ENCODE measurements at regions of chr19 and their contacts with region 1.

Region 1: DNA sequence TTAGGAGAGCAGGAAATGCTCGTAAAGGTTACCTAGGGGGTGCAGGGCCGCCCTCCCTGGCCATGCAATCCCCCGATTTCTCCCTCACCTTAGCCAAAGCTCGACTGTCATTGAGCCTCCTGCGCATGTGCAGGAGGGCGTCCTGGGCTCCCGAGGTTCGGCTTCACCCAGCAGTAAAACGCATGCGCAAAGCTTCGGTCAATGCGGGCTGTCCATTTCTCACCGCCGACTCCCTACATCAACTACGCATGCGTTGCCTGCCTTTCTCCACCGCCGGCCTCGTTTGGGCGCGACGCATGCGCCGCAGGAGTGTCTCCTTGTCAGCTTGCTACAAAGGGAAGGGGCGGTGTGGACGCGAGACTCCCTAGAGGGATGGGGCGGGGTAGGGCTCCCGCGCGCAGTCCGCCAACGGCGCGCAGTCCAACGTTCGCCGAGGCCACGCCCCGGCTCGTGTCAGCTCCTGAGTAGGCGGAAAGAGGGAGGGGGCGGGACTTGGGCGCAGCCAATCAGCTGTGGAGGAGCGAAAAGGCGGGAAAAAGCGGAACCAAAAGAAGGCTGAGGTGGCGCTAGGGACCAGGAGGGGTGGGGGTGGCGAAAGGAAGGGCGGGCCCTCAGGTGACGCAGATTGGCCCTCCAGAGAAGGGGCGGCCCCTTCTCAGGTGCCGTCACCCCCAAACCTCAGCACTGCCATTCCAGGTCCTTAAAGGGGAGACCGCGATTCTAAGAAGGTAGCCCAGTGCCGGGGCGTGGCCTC is at the starts of genes SYNGR4 and TMEM143:
- DNase-seq: peak; percentile 99

Region 2: DNA sequence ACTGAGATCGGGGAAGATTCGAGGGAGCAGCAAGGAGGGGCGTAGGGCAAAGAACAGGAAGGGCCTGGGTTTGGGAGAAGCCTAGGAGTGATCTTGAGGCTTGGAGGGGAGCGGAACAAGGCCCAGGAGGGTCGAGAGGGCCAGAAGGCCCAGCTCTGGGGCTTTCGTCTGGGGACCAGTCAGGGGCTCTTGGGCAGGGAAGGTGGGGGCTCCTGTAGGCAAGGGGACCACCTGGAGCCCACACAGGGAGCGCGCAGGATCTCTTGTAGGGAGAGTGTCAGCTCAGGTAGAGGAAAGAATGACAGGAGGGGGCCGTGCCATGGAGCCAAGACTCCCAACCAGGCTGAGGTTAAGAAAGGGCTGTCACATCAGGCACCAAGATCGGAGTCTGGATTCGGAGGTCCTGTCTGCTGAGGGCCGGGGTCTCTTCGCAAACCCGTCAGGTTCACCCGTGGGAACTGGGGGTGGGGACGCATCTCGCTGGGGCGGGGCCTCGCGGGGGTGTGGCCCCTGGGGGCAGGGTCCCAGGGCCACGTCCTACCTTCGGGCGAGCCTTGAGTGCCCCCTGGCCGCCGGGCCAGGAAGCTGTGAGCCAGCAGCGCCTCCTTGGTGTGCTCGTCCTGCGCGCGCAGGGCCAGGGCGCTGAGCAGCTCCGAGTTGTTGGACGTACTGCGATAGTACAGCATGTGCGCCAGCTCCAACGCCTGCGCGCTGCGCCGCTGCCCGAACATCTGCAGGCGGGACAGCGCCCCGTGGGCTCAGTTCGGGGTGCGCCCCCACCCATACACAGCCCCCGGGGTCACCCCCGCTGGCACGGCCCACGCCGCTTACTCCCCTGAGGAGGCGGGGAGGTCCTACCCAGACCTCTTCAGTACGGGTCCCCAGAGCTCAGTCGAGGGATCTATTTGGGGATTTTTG is 30.3 kb before region 1 on chr19:
- CTCF ChIA-PET with region 1: no interaction called
- POLR2A ChIA-PET with region 1: interaction called, 19 read pairs
- DNase-seq: peak; percentile 90

Region 3: DNA sequence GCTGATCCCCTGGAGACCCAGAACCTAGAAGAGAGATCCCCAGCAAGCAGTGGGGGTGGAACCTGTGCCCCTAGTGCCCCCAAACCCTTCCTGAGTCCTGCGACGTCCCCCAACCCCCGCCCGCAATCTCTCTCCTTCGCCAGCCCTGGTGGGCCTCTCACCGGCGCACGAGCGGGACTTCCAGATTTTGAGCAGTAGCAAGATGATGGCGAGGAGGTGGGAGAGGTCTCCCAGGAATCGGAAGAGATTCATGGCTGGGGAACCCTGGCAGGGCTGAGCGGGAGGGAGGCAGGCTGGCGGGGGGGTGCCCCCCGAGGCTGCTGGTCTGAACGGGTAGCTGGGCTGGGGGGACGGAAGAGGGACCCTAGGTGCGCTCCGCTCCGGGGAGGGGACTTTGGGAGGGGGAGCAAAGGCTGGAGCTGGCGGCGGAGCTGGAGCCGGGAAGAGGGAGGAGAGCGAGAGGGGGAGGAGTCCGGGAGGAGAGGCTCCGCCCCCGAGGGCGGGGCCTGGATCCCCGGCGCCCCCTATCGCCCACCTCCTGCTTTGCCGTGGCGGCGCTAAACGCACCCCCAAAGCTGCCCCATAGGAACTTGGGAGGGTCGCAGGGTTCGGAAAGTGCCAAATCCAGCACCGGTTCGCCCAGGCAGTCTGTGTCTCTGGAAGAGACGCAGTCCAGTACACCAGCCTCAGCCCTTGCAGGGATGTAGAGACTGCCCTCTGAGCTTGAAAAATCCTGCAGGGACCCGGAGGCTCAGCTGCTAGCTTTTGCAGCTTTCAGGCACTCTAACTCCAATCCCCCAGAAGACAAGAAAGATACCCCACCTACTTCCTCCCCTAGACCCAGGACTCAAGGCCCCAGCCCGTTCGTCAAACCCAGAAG is 27.4 kb after region 1 on chr19 and contains the start of gene KDELR1:
- CTCF ChIA-PET with region 1: interaction called, 3 read pairs
- POLR2A ChIA-PET with region 1: interaction called, 18 read pairs
- DNase-seq: peak; percentile 92

Region 4: GRCh38 chr19:48398375-48399235 is 34.6 kb after region 1 on chr19:
- CTCF ChIA-PET with region 1: no interaction called
- POLR2A ChIA-PET with region 1: interaction called, 14 read pairs
- DNase-seq: peak; percentile 73

Region 5: GRCh38 chr19:48445606-48446481 is 81.9 kb after region 1 on chr19 and contains the start of gene GRWD1:
- CTCF ChIA-PET with region 1: no interaction called
- POLR2A ChIA-PET with region 1: interaction called, 17 read pairs
- DNase-seq: peak; percentile 93

Measured in HEK293T (cell line).